PC-9 (cell line): ENCODE measurements at regions of chr19 and their contacts with region 1.

Region 1: DNA sequence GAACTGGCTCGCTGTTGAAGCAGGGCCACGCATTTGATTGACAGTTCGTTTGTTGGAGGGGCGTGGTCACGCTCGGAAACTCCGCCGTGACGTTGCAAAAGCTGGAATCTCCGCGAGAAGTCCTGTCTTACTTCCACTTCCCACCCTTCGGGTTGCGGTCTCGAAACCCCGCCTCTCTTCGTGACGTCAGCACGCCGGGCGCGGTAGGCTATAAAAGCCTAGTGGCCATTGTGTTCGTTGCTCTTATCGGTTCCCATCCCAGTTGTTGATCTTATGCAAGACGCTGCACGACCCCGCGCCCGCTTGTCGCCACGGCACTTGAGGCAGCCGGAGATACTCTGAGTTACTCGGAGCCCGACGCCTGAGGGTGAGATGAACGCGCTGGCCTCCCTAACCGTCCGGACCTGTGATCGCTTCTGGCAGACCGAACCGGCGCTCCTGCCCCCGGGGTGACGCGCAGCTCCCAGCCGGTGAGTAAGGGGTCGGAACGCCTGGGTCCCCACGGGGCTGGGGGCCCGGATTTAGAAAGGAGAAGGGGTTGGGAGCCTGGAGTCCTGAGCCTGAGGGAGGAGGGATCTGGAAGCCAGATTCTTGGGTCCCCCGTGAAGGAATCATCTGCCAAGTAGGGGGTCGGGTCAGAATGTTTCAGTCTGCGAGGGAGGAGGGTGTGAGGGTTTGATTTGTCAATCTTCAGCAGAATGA is at the start of gene PPP1R15A:
- DNase-seq: peak; percentile 95 to 98
- H3K4me3 ChIP-seq: peak within 1 kb of the TSS; percentile 93
- H3K27ac ChIP-seq: peak within 1 kb of the TSS; percentile 97
- H3K4me1 ChIP-seq: peaks cover 22% of the 10 kb centered on the region
- H3K27me3 ChIP-seq: peaks cover 2% of the 10 kb centered on the region; the same call in 1 of the 2 replicates
- CTCF ChIP-seq: peak; percentile 39; the same call in 1 of the 2 replicates
- total RNA-seq, gene PPP1R15A: 49.5 and 53.6 TPM in 2 replicates

Region 2: GRCh38 chr19:48618916-48619691 is 253.2 kb before region 1 on chr19 and contains the starts of genes RPL18 and SPHK2:
- CTCF ChIA-PET with region 1: no interaction called
- POLR2A ChIA-PET with region 1: no interaction called
- intact Hi-C with region 1: no loop called
- DNase-seq: peak; percentile 97 to 99
- H3K4me3 ChIP-seq: peak within 1 kb of the TSS; percentile 92
- H3K27ac ChIP-seq: peak within 1 kb of the TSS; percentile 91
- H3K4me1 ChIP-seq: peaks cover 42% of the 10 kb centered on the region
- H3K27me3 ChIP-seq: no peaks in the 10 kb centered on the region
- CTCF ChIP-seq: no peak
- total RNA-seq, gene RPL18: 1,618 and 1,710 TPM in 2 replicates
- total RNA-seq, gene SPHK2: 18.4 and 20.0 TPM in 2 replicates

Region 3: DNA sequence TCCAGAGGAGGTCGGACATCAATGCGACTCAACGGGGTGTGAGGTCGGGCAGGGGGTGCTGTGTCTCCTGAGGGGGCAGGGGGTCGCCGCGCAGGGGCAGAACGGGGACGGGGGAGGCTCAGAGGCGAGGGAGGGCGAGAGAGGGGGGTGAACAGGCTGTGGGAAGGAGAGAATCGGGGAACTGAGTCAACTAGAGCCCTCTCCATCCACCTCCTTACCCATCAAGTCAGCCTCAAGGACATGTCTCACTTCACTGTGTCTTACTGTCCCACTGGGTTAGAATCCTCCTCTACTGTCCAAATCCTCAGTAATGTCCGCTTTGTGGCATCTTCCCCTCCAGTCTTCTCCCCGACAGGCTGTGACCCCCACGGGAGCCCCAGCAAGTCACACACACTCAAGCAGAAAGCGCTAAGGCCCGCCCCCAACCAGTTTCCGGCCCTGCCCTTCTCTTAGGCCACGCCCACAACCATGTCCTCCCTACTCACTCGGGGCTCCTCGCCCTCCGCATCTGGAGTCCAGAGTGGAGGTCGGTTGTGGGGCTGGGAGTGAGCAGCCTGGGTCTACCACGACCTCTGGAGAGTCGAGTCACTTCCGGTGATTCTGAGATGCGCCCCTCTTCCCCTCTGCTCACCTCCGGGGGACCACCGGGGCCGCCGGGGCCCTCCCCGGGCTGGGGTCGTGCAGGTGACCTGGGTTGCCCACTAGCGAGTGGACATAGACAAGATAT is 13.2 kb before region 1 on chr19:
- CTCF ChIA-PET with region 1: no interaction called
- POLR2A ChIA-PET with region 1: interaction called, 16 read pairs
- intact Hi-C with region 1: no loop called
- DNase-seq: no peak
- H3K4me3 ChIP-seq: no peak overlapping the region
- H3K27ac ChIP-seq: no peak overlapping the region
- H3K4me1 ChIP-seq: 0 out of 2 replicates have a peak, but pooled peaks cover 2% of the 10 kb centered on the region
- H3K27me3 ChIP-seq: 0 out of 2 replicates have a peak, but pooled peaks cover 4% of the 10 kb centered on the region
- CTCF ChIP-seq: no peak

Region 4: GRCh38 chr19:48899781-48900476 is 27.6 kb after region 1 on chr19 and contains the start of gene NUCB1:
- CTCF ChIA-PET with region 1: no interaction called
- POLR2A ChIA-PET with region 1: interaction called, 4 read pairs
- intact Hi-C with region 1: loop called (anchors 1 kb)
- DNase-seq: peak; percentile 97 to 98
- H3K4me3 ChIP-seq: peak within 1 kb of the TSS; percentile 98
- H3K27ac ChIP-seq: peak within 1 kb of the TSS; percentile 67
- H3K4me1 ChIP-seq: peaks cover 15% of the 10 kb centered on the region
- H3K27me3 ChIP-seq: no peaks in the 10 kb centered on the region
- CTCF ChIP-seq: no peak
- total RNA-seq, gene NUCB1: 185 and 216 TPM in 2 replicates

Region 5: GRCh38 chr19:48965040-48965805 is 92.9 kb after region 1 on chr19 and contains the start of gene FTL:
- CTCF ChIA-PET with region 1: no interaction called
- POLR2A ChIA-PET with region 1: no interaction called
- intact Hi-C with region 1: loop called (anchors 1 kb)
- DNase-seq: peak; percentile 92 to 99
- H3K4me3 ChIP-seq: peak within 1 kb of the TSS; percentile 84
- H3K27ac ChIP-seq: peak within 1 kb of the TSS; percentile 95
- H3K4me1 ChIP-seq: peaks cover 39% of the 10 kb centered on the region
- H3K27me3 ChIP-seq: no peaks in the 10 kb centered on the region
- CTCF ChIP-seq: no peak
- total RNA-seq, gene FTL: 3,402 and 3,822 TPM in 2 replicates